GM13976 (cell line): ENCODE measurements at regions of chr20 and their contacts with region 1.

Region 1: DNA sequence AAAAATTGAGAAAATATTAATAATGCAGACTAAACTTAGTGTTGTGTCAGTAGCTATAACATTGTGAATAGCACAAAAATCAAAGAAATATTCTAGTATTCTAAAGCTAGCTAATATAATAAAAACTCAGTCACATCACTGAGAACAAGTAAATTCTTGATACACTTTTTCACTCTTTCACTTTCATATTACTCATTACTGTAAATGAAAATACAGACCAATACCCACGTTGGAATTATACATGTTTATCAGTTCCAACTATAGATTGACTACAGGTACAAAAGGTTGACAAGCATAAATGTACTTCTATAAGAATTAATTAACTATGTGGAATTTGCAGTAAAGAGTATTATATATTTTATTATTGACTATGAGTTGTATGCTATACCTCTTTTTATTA is 1043.4 kb upstream of the FLRT3 start:
- DNase-seq: no peak
- CTCF ChIP-seq: no peak

Region 2: DNA sequence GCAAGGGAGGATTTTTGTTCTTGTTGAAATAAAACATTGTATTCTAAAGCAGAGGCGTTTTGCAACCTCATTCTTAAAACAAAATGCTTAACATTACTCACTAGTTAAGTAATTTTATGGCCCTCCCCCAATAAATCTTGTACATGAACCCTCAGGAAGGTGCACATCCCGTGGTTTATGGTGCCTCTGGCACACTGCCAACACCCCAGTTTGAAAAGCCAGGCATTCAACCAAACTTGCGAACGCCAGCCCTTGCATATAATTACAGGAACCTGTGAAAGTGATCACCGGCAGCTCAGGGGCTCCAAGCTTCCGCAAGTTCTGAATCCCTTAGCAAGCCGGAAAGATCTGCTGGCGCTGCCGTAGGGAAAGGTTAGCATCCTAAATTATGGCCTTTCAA is 65.6 kb after region 1 on chr20:
- in situ Hi-C with region 1: loop called (anchors 10 kb)
- DNase-seq: no peak
- CTCF ChIP-seq: no peak